Activated T-helper 2 cell treated with anti-CD3 and anti-CD28 coated beads, Interferon-gamma antibody, Interleukin-2, Interleukin-4, amounts not matched to agents 10 μg/mL and 5 μg/mL and 100 μg/mL, durations not matched to agents 14 hours and 24 hours and 36 hours (primary cell): ENCODE measurements at regions of chr5 and their contacts with region 1.

Region 1: GRCh38 chr5:91361055-91361701 is 21.9 kb downstream of the ARRDC3 start:
- DNase-seq: no peak
- H3K4me3 Mint-ChIP-seq: no peak overlapping the region
- H3K27ac Mint-ChIP-seq: no peak overlapping the region
- H3K4me1 Mint-ChIP-seq: peaks cover 7% of the 10 kb centered on the region
- H3K27me3 Mint-ChIP-seq: peaks cover 27% of the 10 kb centered on the region

Region 2: GRCh38 chr5:90585337-90585986 is 775.7 kb before region 1 on chr5:
- intact Hi-C with region 1: no loop called
- DNase-seq: no peak
- H3K4me3 Mint-ChIP-seq: no peak overlapping the region
- H3K27ac Mint-ChIP-seq: no peak overlapping the region
- H3K4me1 Mint-ChIP-seq: peaks cover 3% of the 10 kb centered on the region
- H3K27me3 Mint-ChIP-seq: peaks cover 1% of the 10 kb centered on the region

Region 3: DNA sequence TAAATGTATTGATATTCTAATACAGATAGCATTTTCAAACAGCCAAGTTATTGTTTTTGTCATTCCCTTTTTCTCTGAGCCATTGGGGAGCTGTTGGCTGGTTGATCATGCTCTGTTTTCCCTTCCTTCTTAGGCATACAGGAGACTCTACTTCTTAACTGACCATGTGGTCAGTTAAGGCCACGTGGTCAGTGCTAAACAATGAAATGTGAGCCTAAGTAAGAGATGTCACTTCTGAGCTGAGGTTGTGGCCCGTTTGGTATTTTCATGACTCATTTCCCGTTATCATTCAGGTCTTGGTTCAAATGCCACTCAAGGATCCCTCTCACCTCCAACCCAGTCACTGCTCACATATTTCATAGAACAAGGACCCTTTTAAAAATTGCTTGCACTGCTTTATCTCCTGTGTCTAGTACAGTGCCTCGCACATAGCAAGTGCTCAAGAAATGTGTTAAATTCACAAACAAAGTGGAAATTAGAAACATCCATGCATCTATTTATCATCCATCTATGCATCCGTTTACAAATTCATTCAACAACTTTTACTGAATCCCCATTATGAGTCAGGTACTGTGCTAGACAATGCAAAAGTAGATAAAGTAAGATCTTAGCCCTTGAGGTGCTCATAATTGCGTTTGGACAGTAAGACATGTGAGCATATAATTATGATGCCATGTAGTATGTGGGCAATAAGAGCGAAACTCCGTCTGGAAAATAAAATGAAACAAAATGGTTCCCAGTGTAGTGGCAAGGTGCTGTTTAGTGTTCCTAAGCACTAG is 28.7 kb before region 1 on chr5:
- intact Hi-C with region 1: loop called (anchors 2 kb)
- DNase-seq: no peak
- H3K4me3 Mint-ChIP-seq: no peak overlapping the region
- H3K27ac Mint-ChIP-seq: peak overlapping the region; percentile 6
- H3K4me1 Mint-ChIP-seq: peaks cover 30% of the 10 kb centered on the region
- H3K27me3 Mint-ChIP-seq: peaks cover 25% of the 10 kb centered on the region